Heart right ventricle (tissue), 16 donors: ENCODE measurements at regions of chr10 and their contacts with region 1.

Region 1: GRCh38 chr10:30241422-30242110 is 107.5 kb downstream of the MTPAP start:
- DNase-seq: no peak
- ATAC-seq: no peak
- H3K4me3 ChIP-seq: no peak overlapping the region
- H3K27ac ChIP-seq: no peak overlapping the region
- H3K4me1 ChIP-seq: peaks cover 0 to 24% (median 4%) of the 10 kb centered on the region in 9 donors
- H3K27me3 ChIP-seq: no peaks in the 10 kb centered on the region
- CTCF ChIP-seq: no peak

Region 2: GRCh38 chr10:29430101-29430500 is 811.5 kb before region 1 on chr10:
- intact Hi-C with region 1: no loop called
- DNase-seq: no peak
- ATAC-seq: no peak
- H3K4me3 ChIP-seq: no peak overlapping the region
- H3K27ac ChIP-seq: no peak overlapping the region
- H3K4me1 ChIP-seq: peaks cover 0 to 21% (median 0%) of the 10 kb centered on the region in 9 donors
- H3K27me3 ChIP-seq: no peaks in the 10 kb centered on the region
- CTCF ChIP-seq: no peak

Region 3: DNA sequence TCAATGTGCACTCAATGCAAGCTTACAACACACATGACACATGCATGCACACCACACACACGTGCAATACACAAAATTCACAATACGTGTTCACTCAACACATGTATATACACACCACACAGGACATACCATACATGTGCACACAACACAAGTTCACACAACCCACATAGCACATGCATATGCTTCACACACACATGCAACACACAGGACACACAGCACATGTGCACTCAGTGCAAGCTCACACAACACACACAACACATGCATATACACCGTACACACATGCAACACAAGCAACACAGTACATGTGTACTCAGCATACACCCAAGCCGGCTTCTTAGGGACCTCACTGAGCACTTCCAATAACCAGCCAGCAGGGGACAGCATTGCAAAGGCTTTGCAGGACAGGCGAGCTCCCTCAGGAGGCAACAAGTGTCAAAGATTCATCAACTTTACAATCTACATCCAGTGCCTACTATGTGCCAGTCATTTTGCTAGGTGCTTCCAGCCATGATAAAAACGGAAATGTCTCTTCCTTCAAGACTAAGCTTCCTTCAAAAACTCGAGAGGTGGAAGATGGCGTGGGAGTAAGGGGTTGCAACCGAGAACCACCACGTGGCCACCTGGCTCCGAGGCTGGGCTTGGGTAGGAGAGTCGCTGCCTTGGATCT is 243.3 kb before region 1 on chr10:
- intact Hi-C with region 1: loop called (anchors 1 to 5 kb)
- DNase-seq: peak; percentile 62 to 80
- ATAC-seq: peak in 7 of 8 donors; percentile 45 to 70 (median 63)
- H3K4me3 ChIP-seq: no peak overlapping the region
- H3K27ac ChIP-seq: no peak overlapping the region
- H3K4me1 ChIP-seq: peaks cover 11 to 36% (median 29%) of the 10 kb centered on the region in 9 donors
- H3K27me3 ChIP-seq: peaks cover 0 to 11% (median 0%) of the 10 kb centered on the region in 7 donors
- CTCF ChIP-seq: peak; percentile 96 to 100 (median 99)

Region 4: DNA sequence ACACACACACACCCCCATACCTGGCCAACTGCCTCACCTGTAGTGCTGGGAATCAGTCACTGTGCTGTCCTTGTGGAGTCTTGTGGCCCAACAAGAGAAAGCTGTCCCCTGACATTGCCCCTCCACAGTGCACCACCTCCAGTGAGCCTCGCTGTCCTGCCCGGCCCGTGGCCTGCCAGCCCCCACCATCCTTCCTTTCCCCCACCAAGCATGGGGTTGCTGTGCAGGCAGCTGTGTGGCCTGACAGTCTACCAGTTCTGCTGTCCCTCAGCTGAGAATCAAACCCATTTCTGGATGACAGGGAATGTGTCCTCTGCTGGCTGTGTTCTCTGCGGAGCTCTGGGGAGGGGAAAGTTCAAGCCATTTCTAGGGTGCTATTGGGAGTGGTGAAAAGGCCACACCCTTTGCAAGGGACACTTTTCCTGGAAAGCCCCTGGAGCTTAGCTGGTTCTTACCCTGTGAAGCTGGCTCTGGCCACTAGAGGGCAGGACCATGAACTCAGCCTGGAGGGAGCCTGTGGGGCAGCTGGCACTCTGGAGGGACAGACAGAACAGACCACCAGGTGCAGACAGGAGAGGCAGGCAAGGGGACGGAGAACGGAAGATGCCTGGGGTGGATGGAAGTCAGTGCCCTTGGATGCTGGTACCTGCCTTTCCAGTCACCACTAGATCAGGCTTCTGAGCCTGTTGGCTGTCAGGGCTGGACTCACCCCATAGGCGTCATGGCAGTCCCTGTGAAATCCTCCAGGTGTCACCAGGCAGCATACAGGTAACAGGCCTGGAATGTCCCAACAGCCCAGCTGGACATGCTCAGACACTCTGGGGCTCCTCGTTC is 118.0 kb after region 1 on chr10:
- intact Hi-C with region 1: no loop called
- DNase-seq: peak; percentile 34 to 40
- ATAC-seq: peak in 6 of 8 donors; percentile 47 to 64 (median 58)
- H3K4me3 ChIP-seq: no peak overlapping the region
- H3K27ac ChIP-seq: no peak overlapping the region
- H3K4me1 ChIP-seq: peaks cover 0 to 5% (median 0%) of the 10 kb centered on the region in 9 donors
- H3K27me3 ChIP-seq: no peaks in the 10 kb centered on the region
- CTCF ChIP-seq: peak; percentile 43 to 82 (median 69)

Region 5: DNA sequence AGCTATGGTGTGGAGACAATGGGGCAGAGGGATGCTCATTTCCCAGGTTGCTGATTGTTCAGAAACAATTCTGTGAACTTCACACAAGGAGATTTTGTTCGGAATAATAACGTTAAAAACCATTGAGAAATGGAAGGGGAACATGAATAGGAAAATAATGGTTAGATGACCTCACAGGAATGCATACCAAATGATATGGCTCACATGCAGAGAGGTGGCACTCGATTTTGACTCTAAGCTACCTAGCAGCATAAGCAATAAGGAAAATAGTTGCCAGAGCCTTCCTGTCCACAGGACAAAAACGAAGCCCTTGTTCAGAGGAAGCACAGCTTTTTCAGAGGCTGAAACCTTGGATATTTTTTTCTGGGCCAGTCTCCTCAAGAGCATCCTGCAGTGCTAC is 1370.5 kb after region 1 on chr10:
- intact Hi-C with region 1: loop called in 1 of 10 experiments (anchors 5 kb)
- DNase-seq: no peak
- ATAC-seq: no peak
- H3K4me3 ChIP-seq: no peak overlapping the region
- H3K27ac ChIP-seq: peak overlapping the region in 1 of 10 donors; percentile 24
- H3K4me1 ChIP-seq: peaks cover 0 to 13% (median 0%) of the 10 kb centered on the region in 9 donors
- H3K27me3 ChIP-seq: no peaks in the 10 kb centered on the region
- CTCF ChIP-seq: no peak